Calu3 (cell line): ENCODE measurements at regions of chr14 and their contacts with region 1.

Region 1: DNA sequence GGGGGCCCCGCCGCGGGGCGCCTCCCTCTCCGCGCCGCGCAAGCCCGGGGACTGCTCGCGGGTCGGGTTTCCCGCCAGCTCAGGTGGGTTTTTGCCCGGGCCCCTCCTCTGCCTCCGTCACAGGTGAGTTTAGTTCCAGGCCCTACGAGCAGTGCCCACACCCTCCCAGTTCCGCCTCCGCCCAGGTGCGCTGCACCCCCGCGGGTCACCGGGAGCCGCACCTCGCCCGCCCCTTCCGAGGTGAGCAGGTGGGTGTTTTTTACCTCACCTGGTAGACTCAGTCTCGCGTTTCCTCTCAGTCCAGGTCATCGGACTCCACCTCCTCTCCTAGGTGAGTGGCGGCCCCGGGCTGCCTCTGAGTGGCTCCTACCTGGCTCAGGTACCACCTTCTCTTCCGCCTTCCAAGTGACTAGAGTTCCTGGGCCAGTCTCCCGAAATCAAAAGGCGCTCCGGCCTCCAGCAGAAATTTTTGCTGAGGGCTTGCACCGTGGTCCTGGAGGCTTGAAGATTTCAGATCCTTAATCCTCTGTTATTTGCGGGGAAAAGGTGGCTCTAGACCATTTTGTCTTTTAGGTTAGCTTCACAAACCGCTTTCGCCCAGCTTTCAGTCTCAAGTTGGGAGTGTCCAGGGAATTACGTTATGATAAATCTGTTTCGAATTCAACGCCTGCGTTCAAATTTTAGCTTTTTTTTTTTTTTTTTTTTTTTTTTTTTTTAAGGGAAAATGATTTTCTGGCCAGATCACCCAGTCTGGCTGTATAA is at the start of gene TMEM30B:
- DNase-seq: peak; percentile 94
- H3K4me3 Mint-ChIP-seq: peak within 1 kb of the TSS; percentile 100
- H3K27ac Mint-ChIP-seq: peak within 1 kb of the TSS; percentile 55
- H3K4me1 Mint-ChIP-seq: peaks cover 33% of the 10 kb centered on the region
- H3K27me3 Mint-ChIP-seq: no peaks in the 10 kb centered on the region
- CTCF ChIP-seq: no peak
- total RNA-seq, gene TMEM30B: 55.5 and 79.2 TPM in 2 replicates

Region 2: DNA sequence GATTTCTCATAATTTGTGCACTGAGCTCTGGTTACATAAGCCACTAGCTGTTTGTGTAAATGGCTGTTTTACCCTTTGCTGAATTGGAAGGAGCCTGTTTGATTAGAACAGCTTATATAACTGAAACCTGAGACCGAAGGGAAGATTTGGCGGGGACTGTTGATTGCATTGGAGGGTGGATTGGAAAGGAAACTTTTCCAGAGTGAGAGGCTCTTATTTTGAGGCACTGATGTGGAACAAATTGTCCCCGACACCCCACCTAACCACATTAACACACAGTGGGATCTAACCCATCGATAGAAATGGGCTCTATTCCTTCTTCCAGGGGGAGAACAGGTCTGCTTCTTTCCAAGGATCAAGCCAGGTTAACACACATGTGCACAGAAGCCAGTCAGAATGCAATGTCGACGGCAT is 51.9 kb before region 1 on chr14:
- CTCF ChIA-PET with region 1: no interaction called
- intact Hi-C with region 1: no loop called
- DNase-seq: no peak
- H3K4me3 Mint-ChIP-seq: no peak overlapping the region
- H3K27ac Mint-ChIP-seq: no peak overlapping the region
- H3K4me1 Mint-ChIP-seq: no peaks in the 10 kb centered on the region
- H3K27me3 Mint-ChIP-seq: no peaks in the 10 kb centered on the region
- CTCF ChIP-seq: no peak

Region 3: GRCh38 chr14:61269321-61270083 is 11.9 kb before region 1 on chr14:
- CTCF ChIA-PET with region 1: interaction called, 4 read pairs
- intact Hi-C with region 1: loop called (anchors 1 kb)
- DNase-seq: peak; percentile 74
- H3K4me3 Mint-ChIP-seq: peak overlapping the region; percentile 61
- H3K27ac Mint-ChIP-seq: no peak overlapping the region
- H3K4me1 Mint-ChIP-seq: peaks cover 9% of the 10 kb centered on the region
- H3K27me3 Mint-ChIP-seq: peaks cover 13% of the 10 kb centered on the region
- CTCF ChIP-seq: peak; percentile 59

Region 4: DNA sequence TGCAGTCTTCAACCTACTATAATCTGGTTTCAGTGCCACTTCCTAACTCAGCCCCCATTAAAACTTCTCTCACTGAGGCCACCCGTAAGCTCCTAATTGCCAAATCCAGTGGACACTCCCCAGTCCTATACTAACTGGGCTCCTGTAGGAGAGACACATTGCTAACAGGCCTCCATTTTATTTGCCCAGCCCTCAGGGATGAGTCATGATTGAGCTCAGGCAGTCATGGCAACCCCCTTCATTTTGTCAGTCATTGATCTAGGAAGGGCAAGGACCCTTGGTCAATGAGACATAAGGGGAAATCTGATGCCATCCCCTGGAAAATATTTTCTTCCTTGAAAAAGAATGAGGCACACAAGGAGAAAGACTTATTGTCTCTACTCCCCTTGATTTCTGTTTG is 343.8 kb after region 1 on chr14:
- CTCF ChIA-PET with region 1: no interaction called
- intact Hi-C with region 1: no loop called
- DNase-seq: peak; percentile 37
- H3K4me3 Mint-ChIP-seq: no peak overlapping the region
- H3K27ac Mint-ChIP-seq: peak overlapping the region; percentile 27
- H3K4me1 Mint-ChIP-seq: peaks cover 21% of the 10 kb centered on the region
- H3K27me3 Mint-ChIP-seq: no peaks in the 10 kb centered on the region
- CTCF ChIP-seq: no peak